ENCODE measurements at regions of chr9 and their contacts with region 1.

Region 1: DNA sequence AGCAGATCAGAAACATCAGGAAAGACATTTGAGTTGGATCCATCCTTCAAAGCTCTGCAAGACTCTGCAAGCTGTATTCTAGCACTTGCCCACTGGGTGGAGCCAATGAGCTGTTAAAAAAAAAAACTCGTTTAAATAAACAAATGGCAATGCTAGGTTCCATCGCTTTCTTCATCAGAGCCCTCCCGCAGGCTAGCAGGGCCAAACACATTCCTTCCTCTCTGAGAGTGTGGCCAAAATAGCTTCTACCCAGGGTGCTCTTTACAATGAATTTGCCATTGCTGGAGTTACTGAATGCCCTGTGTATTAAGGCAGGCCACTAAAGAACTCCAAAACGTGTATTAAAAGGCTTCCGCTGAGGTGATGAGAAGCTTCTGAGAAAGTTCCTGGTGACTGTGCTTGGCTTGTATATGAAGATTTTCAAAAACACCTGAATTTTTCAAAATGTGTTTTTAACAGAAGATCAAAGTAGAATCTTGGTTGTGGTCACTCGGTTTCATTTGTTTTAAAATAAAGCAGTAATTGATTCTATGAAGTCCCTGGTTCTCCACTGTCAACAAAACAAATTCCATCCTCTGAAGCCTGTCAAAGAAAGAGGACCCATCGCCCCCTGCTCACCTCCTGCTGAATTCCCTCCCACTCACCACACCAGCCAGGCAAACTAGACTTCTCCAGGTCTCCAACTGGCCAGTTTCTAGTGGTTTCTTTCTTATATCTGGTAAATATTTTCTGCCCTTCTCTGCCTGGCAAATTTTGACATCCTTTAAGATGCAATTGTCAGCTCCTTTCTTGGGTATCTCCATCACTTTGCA is 36.5 kb upstream of the EQTN start:
- DNase-seq: no peak
- ATAC-seq: peak; percentile 92

Region 2: DNA sequence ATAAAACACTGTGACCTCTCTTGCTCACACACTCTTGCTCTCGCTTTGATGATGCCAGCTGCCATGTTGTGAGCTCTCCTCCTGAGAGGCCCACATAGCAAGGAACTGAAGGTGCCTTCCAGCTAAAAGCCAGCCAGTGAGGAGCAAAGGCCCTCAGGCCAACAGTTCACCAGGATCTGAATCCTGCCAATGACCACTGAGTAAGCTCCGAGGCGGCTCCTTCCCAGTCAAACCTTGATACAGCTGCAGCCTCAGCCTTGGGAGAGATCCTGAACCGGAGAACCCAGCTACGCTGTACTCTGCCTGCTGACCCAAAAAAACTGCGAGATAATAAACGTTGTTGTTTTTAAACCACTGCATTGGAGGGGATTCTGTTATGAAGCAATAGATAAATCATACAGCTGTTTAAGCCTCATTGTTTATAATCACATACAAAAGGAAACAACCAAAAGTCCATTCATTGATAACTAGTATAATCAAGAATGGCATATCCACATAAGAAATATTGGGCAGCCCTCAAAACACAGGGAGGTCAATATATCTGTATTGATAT is 141.7 kb after region 1 on chr9:
- intact Hi-C with region 1: loop called (anchors 5 kb)
- DNase-seq: no peak
- ATAC-seq: peak; percentile 45

Region 3: GRCh38 chr9:27561685-27562084 is 228.2 kb after region 1 on chr9:
- intact Hi-C with region 1: no loop called
- DNase-seq: no peak
- ATAC-seq: no peak

Measured in Right ventricle myocardium inferior (tissue), 1 donor.